Caco-2 (cell line): ENCODE measurements at regions of chr6 and their contacts with region 1.

Region 1: GRCh38 chr6:52087498-52087999 is at the start of gene PKHD1:
- DNase-seq: peak; percentile 78 to 79
- H3K4me3 ChIP-seq: peak within 1 kb of the TSS; percentile 43
- H3K4me3 Mint-ChIP-seq: peak within 1 kb of the TSS; percentile 76
- H3K27ac Mint-ChIP-seq: peak within 1 kb of the TSS; percentile 58
- H3K4me1 ChIP-seq: peaks cover 7% of the 10 kb centered on the region; the same call in 1 of the 2 replicates
- H3K4me1 Mint-ChIP-seq: peaks cover 13% of the 10 kb centered on the region
- H3K27me3 ChIP-seq: no peaks in the 10 kb centered on the region
- H3K27me3 Mint-ChIP-seq: no peaks in the 10 kb centered on the region
- CTCF ChIP-seq: peak; percentile 53 to 72
- total RNA-seq, gene PKHD1: 2.7 and 3.3 TPM in 2 replicates

Region 2: GRCh38 chr6:52063584-52064344 is 23.8 kb before region 1 on chr6:
- CTCF ChIA-PET with region 1: interaction called, 3 read pairs
- POLR2A ChIA-PET with region 1: no interaction called
- intact Hi-C with region 1: loop called (anchors 1 kb)
- DNase-seq: peak; percentile 48 to 63
- H3K4me3 ChIP-seq: no peak overlapping the region
- H3K4me3 Mint-ChIP-seq: no peak overlapping the region
- H3K27ac Mint-ChIP-seq: peak overlapping the region; percentile 59
- H3K4me1 ChIP-seq: 0 out of 2 replicates have a peak, but pooled peaks cover 4% of the 10 kb centered on the region
- H3K4me1 Mint-ChIP-seq: peaks cover 7% of the 10 kb centered on the region
- H3K27me3 ChIP-seq: no peaks in the 10 kb centered on the region
- H3K27me3 Mint-ChIP-seq: no peaks in the 10 kb centered on the region
- CTCF ChIP-seq: peak; percentile 55 to 71

Region 3: GRCh38 chr6:52115891-52116604 is 28.5 kb after region 1 on chr6:
- CTCF ChIA-PET with region 1: no interaction called
- POLR2A ChIA-PET with region 1: no interaction called
- intact Hi-C with region 1: loop called (anchors 1 kb)
- DNase-seq: peak; percentile 58 to 68
- H3K4me3 ChIP-seq: no peak overlapping the region
- H3K4me3 Mint-ChIP-seq: no peak overlapping the region
- H3K27ac Mint-ChIP-seq: no peak overlapping the region
- H3K4me1 ChIP-seq: peaks cover 11% of the 10 kb centered on the region
- H3K4me1 Mint-ChIP-seq: peaks cover 12% of the 10 kb centered on the region
- H3K27me3 ChIP-seq: no peaks in the 10 kb centered on the region
- H3K27me3 Mint-ChIP-seq: no peaks in the 10 kb centered on the region
- CTCF ChIP-seq: no peak

Region 4: DNA sequence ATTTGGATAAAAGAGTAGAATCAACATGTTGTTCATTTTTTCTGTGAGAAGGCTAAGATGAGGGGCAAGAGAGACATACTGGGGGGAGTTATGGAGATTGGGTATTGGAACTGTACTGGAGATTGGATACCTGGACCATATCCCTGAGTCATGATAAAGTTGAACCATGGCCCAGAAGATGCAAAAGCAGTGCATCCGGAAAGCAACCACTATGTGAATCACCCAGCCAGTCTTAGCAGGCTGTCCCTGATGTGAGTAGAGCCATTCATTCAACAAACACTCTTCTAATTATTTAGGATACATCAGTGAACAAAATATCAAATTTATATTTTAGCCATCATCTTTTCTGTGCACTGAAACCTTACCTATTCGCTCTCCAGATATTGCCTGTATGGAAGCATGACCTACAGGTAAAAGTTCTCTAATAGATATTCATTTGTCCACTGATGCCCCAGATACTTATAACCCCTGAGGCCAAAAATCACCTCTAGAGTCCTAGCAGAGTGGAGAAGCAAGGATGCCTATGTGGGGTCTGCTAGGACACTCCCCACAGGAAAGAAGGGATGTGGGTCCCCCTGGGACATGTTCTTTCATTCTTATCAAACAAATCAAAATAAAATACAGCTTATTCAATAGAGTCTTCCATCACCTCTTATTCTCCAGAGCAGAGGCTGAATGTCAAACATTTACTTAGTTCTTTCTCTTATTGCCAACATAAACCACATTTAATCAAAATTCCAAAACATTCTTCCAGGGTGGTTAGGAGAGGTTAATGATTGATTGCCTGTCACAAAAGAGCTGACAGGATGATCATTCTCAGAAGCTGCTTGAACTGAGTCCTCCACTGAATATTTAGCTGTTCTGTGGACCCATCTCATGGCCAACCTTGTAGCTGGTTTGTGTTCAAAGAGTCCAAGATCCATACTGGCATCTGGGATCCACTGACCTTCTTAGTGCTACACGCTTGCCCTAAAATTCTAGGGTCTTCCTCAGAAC is 36.9 kb after region 1 on chr6:
- CTCF ChIA-PET with region 1: no interaction called
- POLR2A ChIA-PET with region 1: no interaction called
- intact Hi-C with region 1: loop called (anchors 1 kb)
- DNase-seq: no peak
- H3K4me3 ChIP-seq: no peak overlapping the region
- H3K4me3 Mint-ChIP-seq: peak overlapping the region; percentile 51
- H3K27ac Mint-ChIP-seq: no peak overlapping the region
- H3K4me1 ChIP-seq: peaks cover 15% of the 10 kb centered on the region
- H3K4me1 Mint-ChIP-seq: peaks cover 37% of the 10 kb centered on the region
- H3K27me3 ChIP-seq: no peaks in the 10 kb centered on the region
- H3K27me3 Mint-ChIP-seq: no peaks in the 10 kb centered on the region
- CTCF ChIP-seq: no peak

Region 5: GRCh38 chr6:52233975-52234823 is 146.7 kb after region 1 on chr6:
- CTCF ChIA-PET with region 1: no interaction called
- POLR2A ChIA-PET with region 1: no interaction called
- intact Hi-C with region 1: loop called (anchors 1 kb)
- DNase-seq: peak; percentile 60 to 63
- H3K4me3 ChIP-seq: no peak overlapping the region
- H3K4me3 Mint-ChIP-seq: no peak overlapping the region
- H3K27ac Mint-ChIP-seq: no peak overlapping the region
- H3K4me1 ChIP-seq: no peaks in the 10 kb centered on the region
- H3K4me1 Mint-ChIP-seq: no peaks in the 10 kb centered on the region
- H3K27me3 ChIP-seq: no peaks in the 10 kb centered on the region
- H3K27me3 Mint-ChIP-seq: peaks cover 4% of the 10 kb centered on the region
- CTCF ChIP-seq: peak; percentile 59 to 80